ENCODE measurements at regions of chr10 and their contacts with region 1.

Region 1: DNA sequence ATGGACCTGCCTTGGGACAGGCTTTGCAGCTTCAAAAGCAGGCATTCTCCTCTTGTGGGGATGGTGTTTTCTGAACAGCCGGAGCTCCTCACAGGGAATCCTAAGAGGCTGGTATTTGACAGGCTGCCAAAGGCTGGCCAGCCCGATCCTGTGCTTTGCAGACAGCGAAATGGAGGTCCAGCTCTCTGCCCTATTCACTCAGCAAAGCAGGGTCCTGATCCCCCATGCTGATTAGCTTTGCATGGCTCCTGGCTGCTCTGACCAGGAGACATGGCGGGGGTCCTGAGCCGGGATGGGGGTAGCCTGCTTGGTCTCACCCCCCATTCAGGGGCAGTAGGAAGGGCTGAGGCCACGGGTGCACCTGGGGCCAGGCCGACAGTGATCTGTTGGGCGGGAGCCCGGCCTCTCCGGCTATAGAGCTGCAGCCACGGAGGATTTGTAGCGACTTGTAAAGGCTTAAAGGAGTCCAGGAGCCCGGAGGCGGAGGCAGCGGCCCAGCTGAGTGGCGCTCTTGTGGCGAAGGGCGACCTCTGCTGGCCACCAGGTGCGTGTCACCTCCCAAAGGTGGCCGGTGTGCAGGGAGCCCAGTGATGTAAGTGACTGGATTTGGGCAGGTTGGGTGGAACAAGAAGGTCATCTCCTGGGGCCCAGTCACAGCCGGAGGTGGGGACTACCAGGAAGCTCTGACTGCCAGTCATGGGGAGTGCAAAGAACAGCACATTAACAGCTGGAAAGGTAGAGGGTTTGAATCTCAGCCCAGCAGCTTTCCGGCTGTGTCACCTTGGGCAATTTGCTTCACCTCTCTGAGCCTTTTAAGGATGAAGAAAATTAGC is 126.5 kb downstream of the ZMIZ1 start:
- DNase-seq: no peak
- H3K4me3 ChIP-seq: no peak overlapping the region
- CTCF ChIP-seq: peak; percentile 96

Region 2: GRCh38 chr10:78047314-78047891 is 1147.9 kb before region 1 on chr10:
- CTCF ChIA-PET with region 1: interaction called, 86 read pairs
- POLR2A ChIA-PET with region 1: no interaction called
- DNase-seq: peak; percentile 46
- H3K4me3 ChIP-seq: no peak overlapping the region
- CTCF ChIP-seq: peak; percentile 86

Region 3: GRCh38 chr10:78973901-78974616 is 221.2 kb before region 1 on chr10:
- CTCF ChIA-PET with region 1: interaction called, 11 read pairs
- POLR2A ChIA-PET with region 1: interaction called, 3 read pairs
- DNase-seq: no peak
- H3K4me3 ChIP-seq: peak overlapping the region; percentile 48
- CTCF ChIP-seq: no peak

Region 4: DNA sequence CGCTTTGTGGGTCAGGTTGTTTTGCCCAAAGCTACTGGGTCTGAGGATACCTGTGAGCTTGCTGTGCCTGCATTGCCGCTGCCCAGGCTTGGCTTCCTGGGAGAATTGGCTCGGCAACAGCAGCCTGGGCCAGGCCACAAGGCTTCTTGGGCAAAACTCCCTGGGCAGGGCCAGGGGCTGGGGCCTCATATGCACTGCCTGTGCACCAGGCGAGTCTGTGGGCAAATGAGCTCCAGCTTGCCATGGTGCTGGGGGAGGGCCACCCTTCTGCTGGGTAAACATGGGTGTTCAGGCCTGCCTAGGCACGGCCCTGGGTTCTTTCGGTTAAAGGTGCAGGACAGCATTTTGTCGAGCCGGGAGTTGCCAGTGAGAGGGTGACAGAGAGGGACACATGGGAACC is 107.1 kb before region 1 on chr10:
- CTCF ChIA-PET with region 1: interaction called, 11 read pairs
- POLR2A ChIA-PET with region 1: no interaction called
- DNase-seq: no peak
- H3K4me3 ChIP-seq: no peak overlapping the region
- CTCF ChIP-seq: no peak

Region 5: GRCh38 chr10:79116801-79117723 is 78.2 kb before region 1 on chr10:
- CTCF ChIA-PET with region 1: interaction called, 34 read pairs
- POLR2A ChIA-PET with region 1: interaction called, 3 read pairs
- DNase-seq: no peak
- H3K4me3 ChIP-seq: no peak overlapping the region
- CTCF ChIP-seq: no peak

Region 6: GRCh38 chr10:79155301-79156081 is 39.8 kb before region 1 on chr10:
- CTCF ChIA-PET with region 1: interaction called, 17 read pairs
- POLR2A ChIA-PET with region 1: interaction called, 3 read pairs
- DNase-seq: no peak
- H3K4me3 ChIP-seq: no peak overlapping the region
- CTCF ChIP-seq: peak; percentile 15

Region 7: DNA sequence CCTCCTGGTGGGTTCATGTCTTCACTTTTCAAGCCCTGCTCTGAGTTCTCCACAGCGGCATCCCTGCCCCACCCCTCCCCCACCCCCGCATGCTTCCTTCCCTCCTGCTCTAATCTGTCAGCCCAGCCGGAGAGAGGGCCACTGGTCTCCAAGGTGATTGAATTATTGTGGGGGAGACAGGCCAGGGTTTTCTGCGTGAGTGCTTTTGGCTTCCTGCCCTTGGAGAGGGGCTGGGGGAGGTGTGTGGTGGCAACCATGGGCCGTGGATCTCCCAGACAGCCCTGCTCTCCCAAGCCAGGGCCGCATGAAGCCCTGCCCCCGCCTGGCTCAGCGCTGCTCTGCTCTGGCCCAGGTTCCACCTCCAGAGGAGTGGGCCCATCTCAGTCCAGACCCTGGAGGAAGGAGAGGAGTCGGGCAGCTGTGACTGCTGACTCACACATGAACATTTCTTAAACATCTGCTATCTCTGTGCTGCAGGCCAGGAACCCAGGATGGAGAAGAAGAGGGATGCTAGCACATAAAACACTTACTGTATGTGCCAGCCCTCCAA is 16.6 kb before region 1 on chr10:
- CTCF ChIA-PET with region 1: interaction called, 31 read pairs
- POLR2A ChIA-PET with region 1: interaction called, 3 read pairs
- DNase-seq: no peak
- H3K4me3 ChIP-seq: no peak overlapping the region
- CTCF ChIP-seq: peak; percentile 6

Region 8: GRCh38 chr10:79275431-79275851 is 80.1 kb after region 1 on chr10:
- CTCF ChIA-PET with region 1: no interaction called
- POLR2A ChIA-PET with region 1: no interaction called
- DNase-seq: no peak
- H3K4me3 ChIP-seq: no peak overlapping the region
- CTCF ChIP-seq: no peak

Region 9: GRCh38 chr10:79310911-79311573 is 115.7 kb after region 1 on chr10:
- CTCF ChIA-PET with region 1: no interaction called
- POLR2A ChIA-PET with region 1: no interaction called
- DNase-seq: no peak
- H3K4me3 ChIP-seq: no peak overlapping the region
- CTCF ChIP-seq: no peak